ENCODE measurements at regions of chr1 and their contacts with region 1.

Region 1: GRCh38 chr1:56169856-56170255 is 409.5 kb downstream of the PLPP3 start:
- DNase-seq: no peak
- H3K4me3 ChIP-seq: no peak overlapping the region
- H3K27ac ChIP-seq: peak overlapping the region in 1 of 2 donors; percentile 3
- H3K4me1 ChIP-seq: peaks cover 0 to 22% (median 4%) of the 10 kb centered on the region in 4 donors
- H3K27me3 ChIP-seq: no peaks in the 10 kb centered on the region
- CTCF ChIP-seq: no peak

Region 2: GRCh38 chr1:56135069-56135863 is 34.6 kb before region 1 on chr1:
- intact Hi-C with region 1: no loop called
- DNase-seq: no peak
- H3K4me3 ChIP-seq: no peak overlapping the region
- H3K27ac ChIP-seq: no peak overlapping the region
- H3K4me1 ChIP-seq: peaks cover 0 to 14% (median 0%) of the 10 kb centered on the region in 4 donors
- H3K27me3 ChIP-seq: no peaks in the 10 kb centered on the region
- CTCF ChIP-seq: no peak

Region 3: GRCh38 chr1:56249234-56249633 is 79.4 kb after region 1 on chr1:
- intact Hi-C with region 1: no loop called
- DNase-seq: peak in 1 of 2 donors; percentile 44
- H3K4me3 ChIP-seq: no peak overlapping the region
- H3K27ac ChIP-seq: no peak overlapping the region
- H3K4me1 ChIP-seq: no peaks in the 10 kb centered on the region
- H3K27me3 ChIP-seq: no peaks in the 10 kb centered on the region
- CTCF ChIP-seq: no peak

Region 4: GRCh38 chr1:56477164-56478111 is 307.6 kb after region 1 on chr1:
- intact Hi-C with region 1: loop called (anchors 10 kb)
- DNase-seq: peak; percentile 67 to 83
- H3K4me3 ChIP-seq: peak overlapping the region; percentile 60 to 77
- H3K27ac ChIP-seq: peak overlapping the region; percentile 87 to 91
- H3K4me1 ChIP-seq: peaks cover 0 to 22% (median 5%) of the 10 kb centered on the region in 4 donors
- H3K27me3 ChIP-seq: no peaks in the 10 kb centered on the region
- CTCF ChIP-seq: no peak

Measured in tibial artery (tissue), 4 donors.